A549 (cell line): ENCODE measurements at regions of chr15 and their contacts with region 1.

Region 1: DNA sequence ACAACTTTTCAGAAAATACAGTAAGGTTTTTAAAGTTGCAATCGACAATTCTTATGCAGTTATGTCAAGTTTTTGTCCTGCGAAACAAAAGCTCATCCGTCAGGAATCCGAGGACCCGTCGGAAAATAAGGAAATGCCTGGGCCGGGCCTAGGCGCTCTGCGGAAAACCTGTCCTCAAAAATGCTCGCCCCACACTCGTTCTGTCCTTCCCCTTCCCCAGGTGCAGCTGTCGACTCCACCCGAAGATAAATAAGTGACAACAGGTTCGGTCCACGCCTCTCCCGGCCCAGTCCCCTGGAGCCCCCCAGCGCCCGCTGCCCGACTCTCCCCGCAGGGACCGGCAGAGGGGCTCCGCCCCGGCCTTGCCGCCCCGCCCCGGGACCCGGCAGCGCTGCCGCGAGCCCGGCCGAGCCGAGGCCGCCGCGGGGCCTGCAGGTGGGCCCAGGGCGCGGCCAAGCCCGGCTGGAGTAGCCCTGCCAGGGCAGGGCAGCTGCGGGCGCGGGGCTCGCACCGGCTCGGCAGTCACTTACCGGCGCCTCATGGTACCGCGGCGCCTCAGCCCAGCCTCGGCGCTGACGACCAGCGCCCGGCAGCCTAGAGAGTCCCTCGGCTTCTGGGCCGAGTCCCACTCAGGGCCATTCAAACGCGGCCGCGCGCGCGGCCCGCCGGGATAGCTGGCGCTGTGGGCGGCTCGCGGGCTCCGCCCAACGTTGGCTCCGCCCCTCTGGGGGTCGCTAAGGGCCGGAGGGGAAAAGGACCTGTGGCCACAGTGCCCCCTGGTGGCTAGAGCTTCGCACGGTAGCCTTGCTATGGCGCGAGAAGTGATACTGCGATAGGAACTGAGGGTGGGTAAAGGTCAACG is at the start of gene KATNBL1:
- DNase-seq: peak; percentile 86 to 95
- ATAC-seq: peak; percentile 97 to 98
- H3K4me3 ChIP-seq: peak within 1 kb of the TSS; percentile 60
- H3K27ac ChIP-seq: peak within 1 kb of the TSS; percentile 89 to 94
- H3K4me1 ChIP-seq: peaks cover 12% of the 10 kb centered on the region; the same call in 2 of the 3 replicates
- CTCF ChIP-seq: peak; percentile 95
- EP300 ChIP-seq: no peak
- POLR2A ChIP-seq: peak; percentile 93
- RAD21 ChIP-seq: peak; percentile 93 to 96
- polyA plus RNA-seq, gene KATNBL1: 46.6 and 75.8 TPM in 2 replicates

Region 2: GRCh38 chr15:34055853-34056595 is 153.6 kb before region 1 on chr15:
- CTCF ChIA-PET with region 1: interaction called, 112 read pairs
- POLR2A ChIA-PET with region 1: no interaction called
- DNase-seq: no peak
- ATAC-seq: peak; percentile 60 to 76; a peak in 5 of 6 replicates
- H3K4me3 ChIP-seq: no peak overlapping the region
- H3K27ac ChIP-seq: no peak overlapping the region
- H3K4me1 ChIP-seq: 0 out of 3 replicates have a peak, but pooled peaks cover 4% of the 10 kb centered on the region
- CTCF ChIP-seq: no peak
- EP300 ChIP-seq: no peak
- POLR2A ChIP-seq: no peak
- RAD21 ChIP-seq: no peak

Region 3: GRCh38 chr15:34109797-34110663 is 99.6 kb before region 1 on chr15:
- CTCF ChIA-PET with region 1: interaction called, 223 read pairs
- POLR2A ChIA-PET with region 1: interaction called, 35 read pairs
- DNase-seq: peak; percentile 34 to 64
- ATAC-seq: peak; percentile 79; a peak in 5 of 6 replicates
- H3K4me3 ChIP-seq: no peak overlapping the region
- H3K27ac ChIP-seq: no peak overlapping the region
- H3K4me1 ChIP-seq: no peaks in the 10 kb centered on the region
- CTCF ChIP-seq: peak; percentile 94
- EP300 ChIP-seq: no peak
- POLR2A ChIP-seq: no peak
- RAD21 ChIP-seq: peak; percentile 91 to 96

Region 4: DNA sequence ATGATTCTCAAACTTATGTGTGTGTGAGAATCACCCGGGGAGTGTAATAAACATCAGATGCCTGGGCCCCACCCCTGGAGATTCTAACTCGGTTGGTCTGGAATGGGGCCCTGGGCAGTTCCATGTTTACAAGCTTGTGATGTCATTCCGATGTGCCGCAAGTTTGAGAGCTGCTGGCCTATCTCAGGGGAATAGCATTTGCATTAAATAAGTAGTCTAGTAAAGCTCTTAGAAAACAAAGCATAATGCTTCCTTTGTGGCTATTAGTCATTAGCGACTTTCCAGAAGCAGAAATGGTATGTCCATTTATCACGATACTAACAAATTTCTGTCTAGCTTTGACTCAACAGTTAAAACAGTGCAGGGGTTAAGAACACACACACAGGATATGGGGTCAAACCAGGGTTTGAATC is 86.9 kb before region 1 on chr15:
- CTCF ChIA-PET with region 1: interaction called, 26 read pairs
- POLR2A ChIA-PET with region 1: interaction called, 6 read pairs
- DNase-seq: no peak
- ATAC-seq: no peak
- H3K4me3 ChIP-seq: no peak overlapping the region
- H3K27ac ChIP-seq: no peak overlapping the region
- H3K4me1 ChIP-seq: no peaks in the 10 kb centered on the region
- CTCF ChIP-seq: no peak
- EP300 ChIP-seq: no peak
- POLR2A ChIP-seq: no peak
- RAD21 ChIP-seq: no peak

Region 5: DNA sequence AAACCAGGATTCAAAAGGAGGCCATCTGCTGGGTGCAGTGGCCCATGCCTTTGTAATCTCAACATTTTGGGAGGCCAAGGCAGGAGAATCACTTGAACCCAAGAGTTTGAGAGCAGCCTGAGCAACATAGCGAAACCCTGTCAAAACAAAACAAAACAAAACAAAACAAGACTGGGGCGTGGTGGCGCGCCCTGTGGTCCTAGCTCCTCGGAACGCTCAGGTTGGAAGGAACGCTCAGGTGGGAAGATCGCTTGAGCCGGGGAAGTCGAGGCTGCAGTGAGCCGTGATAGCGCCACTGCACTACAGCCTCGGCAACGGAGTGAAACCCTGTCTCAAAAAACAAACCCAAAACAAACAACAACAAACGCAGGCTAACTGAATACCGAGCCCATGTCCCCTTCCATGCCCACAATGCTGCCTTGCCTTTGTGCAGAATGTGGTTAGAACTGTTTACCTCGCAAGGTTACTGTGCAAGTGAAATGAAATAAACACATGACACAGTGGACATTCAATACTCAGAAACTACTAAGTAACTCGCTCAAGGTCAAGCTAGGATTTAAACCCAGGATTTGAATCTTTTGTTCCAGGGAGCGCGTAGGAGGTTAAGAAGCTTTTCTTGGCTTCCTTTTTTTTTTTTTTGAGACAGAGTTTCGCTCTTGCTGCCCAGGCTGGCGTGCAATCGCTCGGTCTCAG is 14.4 kb after region 1 on chr15:
- CTCF ChIA-PET with region 1: interaction called, 20 read pairs
- POLR2A ChIA-PET with region 1: interaction called, 12 read pairs
- DNase-seq: peak; percentile 29 to 35
- ATAC-seq: peak; percentile 30 to 53; a peak in 4 of 6 replicates
- H3K4me3 ChIP-seq: peak overlapping the region; percentile 78
- H3K27ac ChIP-seq: peak overlapping the region; percentile 86 to 92
- H3K4me1 ChIP-seq: peaks cover 4% of the 10 kb centered on the region
- CTCF ChIP-seq: peak; percentile 15; the same call in 2 of the 3 replicates
- EP300 ChIP-seq: no peak
- POLR2A ChIP-seq: 0 out of 2 replicates have a peak, but pooled peaks have one; percentile 8
- RAD21 ChIP-seq: 0 out of 5 replicates have a peak, but pooled peaks of 1 of the 2 experiments have one; percentile 22